Pancreas (tissue), 10 donors: ENCODE measurements at regions of chrX and their contacts with region 1.

Region 1: DNA sequence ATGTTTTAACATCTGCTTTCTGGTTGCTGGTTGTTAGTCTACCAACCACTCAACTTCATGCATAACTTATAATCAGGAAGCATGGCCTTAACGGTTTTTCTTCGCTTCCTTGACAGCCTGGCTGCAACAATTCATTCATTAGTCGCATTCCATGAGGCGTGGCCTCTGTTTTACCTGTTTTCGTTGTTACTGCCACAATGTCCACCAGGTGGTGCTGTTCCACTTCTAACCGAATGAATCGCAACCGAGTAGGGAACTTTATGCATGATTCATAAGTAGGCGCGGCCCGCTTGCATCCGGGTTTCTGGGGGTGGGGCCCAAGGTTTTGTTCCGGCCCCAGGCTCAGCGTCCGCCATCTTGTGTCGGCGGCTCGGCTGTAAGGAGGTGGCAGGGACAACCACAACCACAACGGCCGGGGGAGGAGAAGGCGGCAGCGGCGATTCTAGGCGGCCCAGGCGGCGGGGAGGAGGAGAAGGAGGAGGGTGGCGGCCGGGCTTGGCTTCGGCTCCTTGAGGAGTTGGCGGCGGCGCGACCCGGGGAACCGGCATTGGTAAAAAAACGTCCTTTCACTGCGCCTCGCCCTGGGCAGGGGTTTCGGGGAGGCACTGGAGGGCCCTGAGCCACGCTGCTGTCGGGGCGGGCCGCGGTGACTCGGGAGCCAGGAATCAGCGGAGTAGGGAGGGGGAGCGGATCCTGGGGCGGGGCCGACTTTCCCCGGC is at the start of gene UBA1:
- DNase-seq: peak; percentile 89 to 99 (median 98)
- ATAC-seq: peak; percentile 90 to 94 (median 93)
- H3K4me3 ChIP-seq: peak within 1 kb of the TSS; percentile 70 to 93 (median 90)
- H3K27ac ChIP-seq: peak within 1 kb of the TSS; percentile 80 to 91 (median 84)
- H3K4me1 ChIP-seq: peaks cover 0 to 31% (median 15%) of the 10 kb centered on the region in 3 donors
- H3K27me3 ChIP-seq: peaks cover 0 to 3% (median 0%) of the 10 kb centered on the region in 4 donors
- CTCF ChIP-seq: peak; percentile 79 to 95 (median 90)
- total RNA-seq, gene UBA1: 49.0 to 117 (median 64.0) TPM

Region 2: GRCh38 chrX:46953597-46953996 is 240.0 kb before region 1 on chrX:
- intact Hi-C with region 1: no loop called
- DNase-seq: no peak
- ATAC-seq: peak; percentile 40 to 77 (median 66)
- H3K4me3 ChIP-seq: no peak overlapping the region
- H3K27ac ChIP-seq: peak overlapping the region in 2 of 4 donors; percentile 17 to 41
- H3K4me1 ChIP-seq: peaks cover 0 to 7% (median 0%) of the 10 kb centered on the region in 3 donors
- H3K27me3 ChIP-seq: no peaks in the 10 kb centered on the region
- CTCF ChIP-seq: no peak

Region 3: GRCh38 chrX:47030339-47030738 is 163.3 kb before region 1 on chrX:
- intact Hi-C with region 1: no loop called
- DNase-seq: no peak
- ATAC-seq: peak in 3 of 4 donors; percentile 57 to 65 (median 64)
- H3K4me3 ChIP-seq: no peak overlapping the region
- H3K27ac ChIP-seq: no peak overlapping the region
- H3K4me1 ChIP-seq: no peaks in the 10 kb centered on the region
- H3K27me3 ChIP-seq: no peaks in the 10 kb centered on the region
- CTCF ChIP-seq: peak; percentile 25 to 54 (median 46)

Region 4: DNA sequence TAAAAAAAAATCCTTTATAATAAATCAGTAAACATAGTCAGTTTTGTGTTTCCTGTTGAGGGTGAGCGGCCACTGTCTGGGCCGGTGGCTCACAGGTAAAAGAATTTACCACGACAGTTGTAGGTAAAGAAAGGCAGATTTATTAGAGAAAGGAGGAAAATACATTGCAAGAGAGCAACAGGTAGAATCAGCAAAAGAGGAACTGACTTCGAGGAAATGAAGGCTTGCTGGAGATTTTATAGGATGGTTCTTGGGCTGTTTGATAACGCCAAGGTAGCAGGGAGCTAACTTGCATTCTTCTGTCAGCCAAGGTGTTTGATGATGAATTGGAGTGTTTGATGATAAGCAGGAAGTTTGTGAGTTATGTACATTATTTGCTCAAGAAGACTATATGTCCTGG is 179.6 kb after region 1 on chrX:
- intact Hi-C with region 1: loop called in 1 of 3 experiments (anchors 10 kb)
- DNase-seq: no peak
- ATAC-seq: no peak
- H3K4me3 ChIP-seq: no peak overlapping the region
- H3K27ac ChIP-seq: no peak overlapping the region
- H3K4me1 ChIP-seq: no peaks in the 10 kb centered on the region
- H3K27me3 ChIP-seq: peaks cover 0 to 2% (median 0%) of the 10 kb centered on the region in 4 donors
- CTCF ChIP-seq: no peak

Region 5: GRCh38 chrX:47384502-47384901 is 190.9 kb after region 1 on chrX:
- intact Hi-C with region 1: loop called in 2 of 3 experiments (anchors 5 to 10 kb)
- DNase-seq: peak in 5 of 6 donors; percentile 38 to 73 (median 57)
- ATAC-seq: peak; percentile 87 to 99 (median 92)
- H3K4me3 ChIP-seq: no peak overlapping the region
- H3K27ac ChIP-seq: no peak overlapping the region
- H3K4me1 ChIP-seq: no peaks in the 10 kb centered on the region
- H3K27me3 ChIP-seq: no peaks in the 10 kb centered on the region
- CTCF ChIP-seq: peak; percentile 45 to 78 (median 75)